CD8-positive, alpha-beta T cell (primary cell): ENCODE measurements at regions of chr15 and their contacts with region 1.

Region 1: DNA sequence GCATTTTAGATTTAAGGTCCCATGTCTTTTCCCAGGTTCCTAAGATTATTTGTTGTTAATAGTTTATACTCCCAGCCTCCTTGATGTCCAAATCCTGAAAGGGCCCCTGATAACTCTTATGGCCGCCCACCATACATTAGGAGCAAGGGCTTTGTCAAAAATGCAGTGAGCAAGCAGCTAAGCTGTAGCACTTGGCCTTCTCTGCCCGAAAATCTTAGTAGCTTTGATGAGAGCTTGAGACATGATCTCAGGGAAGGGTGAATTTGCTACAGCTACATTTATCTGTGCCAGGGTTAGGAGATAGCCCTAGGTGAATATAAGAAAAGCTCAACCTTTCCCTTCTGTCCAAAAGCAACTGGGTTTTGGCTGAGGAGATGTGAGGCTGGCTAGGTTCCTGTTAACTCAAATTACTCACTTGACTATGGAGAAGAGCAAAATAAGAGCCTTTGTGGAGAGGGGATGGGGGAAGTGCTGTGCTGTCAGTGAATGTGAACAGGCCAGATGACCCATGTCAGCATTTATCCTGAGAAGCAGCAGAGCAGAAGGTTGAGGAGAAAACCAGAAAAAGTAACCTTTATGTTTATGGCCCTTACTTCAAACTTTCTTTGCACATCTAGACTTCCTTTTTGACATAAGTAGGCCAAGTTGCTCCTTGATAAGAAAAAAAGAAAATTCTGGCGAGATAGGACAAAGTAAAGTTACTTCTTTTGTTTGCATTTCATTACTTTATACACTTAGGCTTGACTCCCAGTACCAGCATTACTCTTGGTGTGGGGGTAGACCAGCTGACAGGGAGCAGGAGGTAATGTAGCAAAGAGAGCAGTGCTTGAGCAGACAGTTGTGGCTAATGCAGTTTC is 21.1 kb downstream of the MAPK6 start:
- DNase-seq: no peak
- ATAC-seq: no peak
- H3K4me3 ChIP-seq: no peak overlapping the region
- H3K4me3 Mint-ChIP-seq: no peak overlapping the region
- H3K27ac ChIP-seq: peak overlapping the region in 1 of 2 experiments; percentile 24
- H3K27ac Mint-ChIP-seq: peak overlapping the region; percentile 69
- H3K4me1 ChIP-seq: peaks cover 31% of the 10 kb centered on the region
- H3K4me1 Mint-ChIP-seq: peaks cover 65% of the 10 kb centered on the region
- H3K27me3 ChIP-seq: no peaks in the 10 kb centered on the region
- H3K27me3 Mint-ChIP-seq: no peaks in the 10 kb centered on the region
- CTCF ChIP-seq: no peak

Region 2: DNA sequence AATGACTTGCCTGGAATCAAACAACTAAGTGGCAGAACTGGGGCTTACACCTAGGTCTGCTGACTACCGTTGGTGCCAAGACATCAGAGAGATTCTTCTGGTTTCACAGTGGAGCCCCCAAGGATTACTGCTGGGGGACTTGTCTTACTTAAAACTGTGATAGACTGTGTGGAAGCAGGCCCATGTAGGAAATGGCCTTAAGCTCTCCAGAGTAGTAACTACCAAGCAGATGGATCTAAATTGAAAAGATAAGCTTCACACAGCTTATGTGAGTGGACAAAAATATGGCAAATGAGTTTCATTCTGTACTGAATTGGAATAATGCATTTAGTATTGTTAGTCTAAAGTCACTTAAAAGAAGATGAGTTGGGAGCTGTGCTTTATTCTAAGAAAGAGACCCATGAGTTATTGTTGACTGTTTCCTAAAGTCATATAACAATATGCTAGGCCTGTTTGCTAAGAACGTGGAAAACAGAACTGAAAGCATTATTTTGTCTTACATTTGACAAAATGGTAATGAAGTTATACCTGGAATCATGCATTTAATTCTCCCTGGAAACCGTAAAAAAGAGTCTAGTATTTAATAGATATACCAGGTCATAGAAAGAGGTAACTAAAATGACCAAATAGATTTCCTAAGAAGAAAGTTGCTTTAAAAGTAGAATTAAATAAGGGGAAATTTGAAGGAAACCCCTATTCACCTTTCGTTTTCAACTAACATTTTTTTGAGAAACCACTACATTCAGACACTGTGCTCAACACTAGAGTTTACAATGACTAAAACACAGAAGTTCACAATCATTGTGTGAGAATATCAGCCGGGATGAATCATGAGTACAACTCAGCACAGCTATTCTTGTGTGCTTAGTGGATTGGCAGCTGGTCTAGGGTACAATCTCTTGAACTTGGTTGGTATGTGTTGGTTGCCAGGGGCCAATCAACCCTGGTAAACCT is 34.1 kb before region 1 on chr15:
- CTCF ChIA-PET with region 1: no interaction called
- POLR2A ChIA-PET with region 1: no interaction called
- intact Hi-C with region 1: loop called in 1 of 2 experiments (anchors 5 kb)
- DNase-seq: no peak
- ATAC-seq: no peak
- H3K4me3 ChIP-seq: no peak overlapping the region
- H3K4me3 Mint-ChIP-seq: no peak overlapping the region
- H3K27ac ChIP-seq: no peak overlapping the region
- H3K27ac Mint-ChIP-seq: no peak overlapping the region
- H3K4me1 ChIP-seq: no peaks in the 10 kb centered on the region
- H3K4me1 Mint-ChIP-seq: peaks cover 14% of the 10 kb centered on the region
- H3K27me3 ChIP-seq: no peaks in the 10 kb centered on the region
- H3K27me3 Mint-ChIP-seq: no peaks in the 10 kb centered on the region
- CTCF ChIP-seq: no peak